Panc1 (cell line): ENCODE measurements at regions of chr2 and their contacts with region 1.

Region 1: GRCh38 chr2:10832203-10832936 is 19.8 kb upstream of the PDIA6 start:
- DNase-seq: peak; percentile 60
- ATAC-seq: peak; percentile 88
- H3K4me3 ChIP-seq: no peak overlapping the region
- H3K27ac ChIP-seq: no peak overlapping the region
- H3K4me1 ChIP-seq: no peaks in the 10 kb centered on the region; the same call in 1 of the 2 replicates
- H3K27me3 ChIP-seq: no peaks in the 10 kb centered on the region
- CTCF ChIP-seq: peak; percentile 98

Region 2: DNA sequence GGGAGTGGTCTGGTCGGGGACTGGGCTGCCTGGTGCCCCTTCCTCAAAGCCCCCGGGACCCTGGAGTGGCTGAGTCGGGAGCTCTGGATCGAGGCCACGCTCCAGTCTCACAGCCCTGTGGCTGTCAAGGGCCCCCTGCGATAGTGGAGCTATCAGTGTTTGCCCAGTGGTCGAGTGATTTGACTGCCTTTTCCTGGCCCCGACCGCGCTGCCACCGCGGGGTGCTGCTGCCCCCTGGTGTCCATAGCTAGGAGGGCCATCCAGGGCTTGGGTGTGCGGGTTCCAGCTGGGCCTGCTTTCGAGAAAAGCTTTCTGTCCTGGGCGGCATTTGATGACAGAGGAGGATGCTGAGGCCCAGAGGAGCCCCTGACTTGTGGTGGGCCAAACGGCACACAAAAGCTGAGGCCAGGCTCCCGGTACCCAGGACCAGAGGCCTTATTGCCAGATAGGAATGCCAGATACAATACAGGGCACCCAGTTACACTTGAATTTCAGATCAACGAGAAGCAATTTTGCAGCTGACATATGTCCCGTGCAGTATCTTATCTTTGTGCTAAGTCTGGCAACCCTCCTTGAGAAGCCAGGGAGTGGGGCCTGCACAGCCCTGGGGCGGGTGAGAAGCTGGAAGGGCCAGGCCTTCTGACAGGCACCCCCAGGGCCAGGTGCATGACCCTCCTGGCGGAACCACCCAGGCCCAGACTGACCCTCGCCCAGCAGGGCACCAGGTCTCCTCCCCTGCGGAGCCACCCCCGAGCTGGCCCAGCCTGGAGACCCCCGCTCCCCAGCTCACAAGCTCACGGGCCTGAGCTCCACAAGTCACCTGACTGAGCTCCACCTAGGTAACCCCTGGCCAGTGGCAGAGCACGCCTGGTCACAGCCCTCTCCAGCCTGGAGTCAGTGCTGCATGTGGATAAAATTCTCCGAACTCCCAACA is 397.2 kb before region 1 on chr2:
- CTCF ChIA-PET with region 1: no interaction called
- POLR2A ChIA-PET with region 1: no interaction called
- in situ Hi-C with region 1: no loop called
- intact Hi-C with region 1: no loop called
- DNase-seq: no peak
- ATAC-seq: peak; percentile 61
- H3K4me3 ChIP-seq: no peak overlapping the region
- H3K27ac ChIP-seq: peak overlapping the region; percentile 26; the same call in 1 of the 2 replicates
- H3K4me1 ChIP-seq: peaks cover 43% of the 10 kb centered on the region
- H3K27me3 ChIP-seq: no peaks in the 10 kb centered on the region
- CTCF ChIP-seq: peak; percentile 97

Region 3: GRCh38 chr2:10601866-10602566 is 230.4 kb before region 1 on chr2:
- CTCF ChIA-PET with region 1: no interaction called
- POLR2A ChIA-PET with region 1: interaction called, 14 read pairs
- in situ Hi-C with region 1: no loop called
- intact Hi-C with region 1: no loop called
- DNase-seq: no peak
- ATAC-seq: no peak
- H3K4me3 ChIP-seq: no peak overlapping the region
- H3K27ac ChIP-seq: no peak overlapping the region
- H3K4me1 ChIP-seq: no peaks in the 10 kb centered on the region
- H3K27me3 ChIP-seq: no peaks in the 10 kb centered on the region
- CTCF ChIP-seq: no peak

Region 4: GRCh38 chr2:10900216-10901109 is 68.1 kb after region 1 on chr2:
- CTCF ChIA-PET with region 1: interaction called, 17 read pairs
- POLR2A ChIA-PET with region 1: no interaction called
- in situ Hi-C with region 1: no loop called
- intact Hi-C with region 1: loop called (anchors 5 kb)
- DNase-seq: no peak
- ATAC-seq: peak; percentile 79
- H3K4me3 ChIP-seq: no peak overlapping the region
- H3K27ac ChIP-seq: no peak overlapping the region
- H3K4me1 ChIP-seq: no peaks in the 10 kb centered on the region; the same call in 1 of the 2 replicates
- H3K27me3 ChIP-seq: no peaks in the 10 kb centered on the region; the same call in 1 of the 2 replicates
- CTCF ChIP-seq: peak; percentile 65

Region 5: GRCh38 chr2:11124503-11125068 is 292.2 kb after region 1 on chr2:
- CTCF ChIA-PET with region 1: interaction called, 15 read pairs
- POLR2A ChIA-PET with region 1: interaction called, 14 read pairs
- in situ Hi-C with region 1: no loop called
- intact Hi-C with region 1: loop called (anchors 1 kb)
- DNase-seq: no peak
- ATAC-seq: peak; percentile 81
- H3K4me3 ChIP-seq: no peak overlapping the region
- H3K27ac ChIP-seq: no peak overlapping the region
- H3K4me1 ChIP-seq: no peaks in the 10 kb centered on the region
- H3K27me3 ChIP-seq: no peaks in the 10 kb centered on the region
- CTCF ChIP-seq: peak; percentile 93

Region 6: GRCh38 chr2:11133238-11133935 is 301.0 kb after region 1 on chr2:
- CTCF ChIA-PET with region 1: interaction called, 24 read pairs
- POLR2A ChIA-PET with region 1: no interaction called
- in situ Hi-C with region 1: no loop called
- intact Hi-C with region 1: no loop called
- DNase-seq: no peak
- ATAC-seq: no peak
- H3K4me3 ChIP-seq: peak overlapping the region; percentile 31 to 38
- H3K27ac ChIP-seq: peak overlapping the region; percentile 55
- H3K4me1 ChIP-seq: peaks cover 10% of the 10 kb centered on the region
- H3K27me3 ChIP-seq: no peaks in the 10 kb centered on the region; the same call in 1 of the 2 replicates
- CTCF ChIP-seq: no peak

Region 7: DNA sequence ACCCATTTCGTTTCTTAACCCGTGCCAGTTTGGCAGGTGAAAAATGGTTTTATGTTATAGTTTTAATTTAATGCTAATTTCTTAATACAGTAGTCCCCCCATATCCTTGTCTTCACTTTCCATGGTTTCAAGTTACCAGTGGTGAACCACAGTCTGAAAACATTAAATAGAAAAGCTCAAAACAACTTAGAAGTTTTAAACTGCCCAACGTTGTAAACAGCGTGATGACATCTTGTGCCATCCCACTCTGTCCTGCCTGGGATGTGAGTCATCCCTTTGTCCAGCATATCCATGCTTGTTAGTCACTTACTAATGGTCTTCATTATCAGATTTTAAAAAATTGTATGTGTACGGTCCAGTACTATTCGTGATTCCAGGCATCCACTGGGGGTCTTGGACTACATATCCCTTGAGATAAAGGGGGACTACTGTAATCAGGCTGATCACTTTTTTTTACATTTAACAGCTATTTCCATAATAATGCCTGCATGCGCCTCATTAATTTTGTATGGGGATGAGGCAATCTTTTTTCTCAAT is 354.8 kb after region 1 on chr2:
- CTCF ChIA-PET with region 1: interaction called, 15 read pairs
- POLR2A ChIA-PET with region 1: no interaction called
- in situ Hi-C with region 1: no loop called
- intact Hi-C with region 1: no loop called
- DNase-seq: peak; percentile 22
- ATAC-seq: peak; percentile 48; the same call in 1 of the 2 replicates
- H3K4me3 ChIP-seq: no peak overlapping the region
- H3K27ac ChIP-seq: no peak overlapping the region
- H3K4me1 ChIP-seq: no peaks in the 10 kb centered on the region
- H3K27me3 ChIP-seq: no peaks in the 10 kb centered on the region
- CTCF ChIP-seq: no peak

Region 8: GRCh38 chr2:12155303-12156051 is 1323.1 kb after region 1 on chr2:
- CTCF ChIA-PET with region 1: no interaction called
- POLR2A ChIA-PET with region 1: no interaction called
- in situ Hi-C with region 1: no loop called
- intact Hi-C with region 1: no loop called
- DNase-seq: peak; percentile 57
- ATAC-seq: peak; percentile 76
- H3K4me3 ChIP-seq: no peak overlapping the region
- H3K27ac ChIP-seq: peak overlapping the region; percentile 39
- H3K4me1 ChIP-seq: peaks cover 5% of the 10 kb centered on the region
- H3K27me3 ChIP-seq: no peaks in the 10 kb centered on the region
- CTCF ChIP-seq: no peak